Uterus (tissue), 4 donors: ENCODE measurements at regions of chr7 and their contacts with region 1.

Region 1: DNA sequence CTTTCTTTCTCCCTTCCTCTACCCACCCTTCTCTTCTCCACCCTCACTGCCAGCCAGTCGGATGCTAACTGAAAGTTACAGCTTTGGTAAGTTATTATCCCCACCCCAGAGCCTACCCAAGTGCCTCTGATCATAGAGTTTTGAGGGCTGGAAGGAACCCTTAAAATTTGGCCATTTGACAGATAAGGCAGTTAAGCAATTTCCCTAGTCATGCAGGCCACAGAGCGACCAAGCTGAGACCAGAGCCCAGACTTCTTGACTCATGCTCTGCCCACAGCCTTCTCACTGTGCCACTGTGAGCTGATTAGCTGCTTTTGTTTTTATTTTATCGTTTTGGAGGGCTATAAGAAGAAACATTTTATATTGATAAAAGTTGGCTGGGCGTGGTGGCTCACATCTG is 17.2 kb downstream of the SAP25 start:
- DNase-seq: no peak
- H3K4me3 ChIP-seq: no peak overlapping the region
- H3K27ac ChIP-seq: no peak overlapping the region
- H3K4me1 ChIP-seq: no peaks in the 10 kb centered on the region
- H3K27me3 ChIP-seq: no peaks in the 10 kb centered on the region
- CTCF ChIP-seq: no peak
- POLR2A ChIP-seq: no peak

Region 2: GRCh38 chr7:100469227-100470044 is 87.1 kb before region 1 on chr7:
- intact Hi-C with region 1: loop called (anchors 5 kb)
- DNase-seq: peak; percentile 89 to 90
- H3K4me3 ChIP-seq: no peak overlapping the region
- H3K27ac ChIP-seq: peak overlapping the region; percentile 47 to 68
- H3K4me1 ChIP-seq: peaks cover 10 to 22% of the 10 kb centered on the region in 2 donors
- H3K27me3 ChIP-seq: no peaks in the 10 kb centered on the region
- CTCF ChIP-seq: peak; percentile 89 to 97 (median 96)
- POLR2A ChIP-seq: no peak